Ascending aorta (tissue), 2 donors: ENCODE measurements at regions of chr11 and their contacts with region 1.

Region 1: DNA sequence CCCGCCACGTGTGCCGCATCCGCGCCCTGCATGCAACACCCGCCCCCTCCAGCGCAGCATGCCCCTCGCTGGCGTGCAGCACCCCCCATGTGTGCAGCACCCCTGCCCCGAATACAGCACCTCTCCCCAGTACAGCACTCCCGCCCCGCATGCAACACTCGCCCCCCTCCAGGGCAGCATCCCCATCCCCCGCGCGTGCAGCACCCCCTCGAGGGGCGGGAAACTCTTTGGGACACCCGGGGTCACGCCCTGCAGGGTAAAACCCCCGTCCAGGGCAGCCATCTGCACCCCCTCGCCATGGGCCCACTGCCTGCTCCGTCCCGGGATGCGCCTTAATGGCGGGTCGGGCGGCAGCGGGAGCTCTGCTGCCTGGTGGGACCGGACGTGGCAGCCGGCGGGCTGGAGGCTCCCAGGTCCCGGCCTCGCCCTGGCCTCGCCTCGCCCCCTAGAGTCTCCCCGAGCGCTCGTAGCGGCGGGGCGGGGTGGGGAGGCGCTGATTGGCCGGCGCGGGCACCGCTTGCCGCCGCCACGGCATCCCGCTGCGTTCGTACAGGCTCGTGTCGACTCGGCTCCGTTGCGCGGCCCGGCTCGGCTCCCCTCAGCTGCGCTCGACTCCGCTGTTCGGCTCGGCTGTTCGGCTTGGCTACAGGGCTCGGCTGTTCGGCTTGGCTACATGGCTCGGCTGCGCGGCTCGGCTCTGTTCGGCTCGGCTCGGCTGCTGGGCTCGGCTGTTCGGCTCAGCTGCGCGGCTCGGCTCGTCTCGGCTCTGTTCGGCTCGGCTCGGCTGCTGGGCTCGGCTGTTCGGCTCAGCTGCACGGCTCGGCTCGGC is 417 bp upstream of the BRSK2 start:
- DNase-seq: peak; percentile 81 to 98
- H3K4me3 ChIP-seq: peak overlapping the region; percentile 59 to 66
- H3K27ac ChIP-seq: peak overlapping the region; percentile 37 to 50
- H3K4me1 ChIP-seq: peaks cover 4 to 11% of the 10 kb centered on the region in 2 donors
- H3K27me3 ChIP-seq: peaks cover 24% of the 10 kb centered on the region
- CTCF ChIP-seq: peak in 2 of 3 experiments; percentile 10 to 33

Region 2: DNA sequence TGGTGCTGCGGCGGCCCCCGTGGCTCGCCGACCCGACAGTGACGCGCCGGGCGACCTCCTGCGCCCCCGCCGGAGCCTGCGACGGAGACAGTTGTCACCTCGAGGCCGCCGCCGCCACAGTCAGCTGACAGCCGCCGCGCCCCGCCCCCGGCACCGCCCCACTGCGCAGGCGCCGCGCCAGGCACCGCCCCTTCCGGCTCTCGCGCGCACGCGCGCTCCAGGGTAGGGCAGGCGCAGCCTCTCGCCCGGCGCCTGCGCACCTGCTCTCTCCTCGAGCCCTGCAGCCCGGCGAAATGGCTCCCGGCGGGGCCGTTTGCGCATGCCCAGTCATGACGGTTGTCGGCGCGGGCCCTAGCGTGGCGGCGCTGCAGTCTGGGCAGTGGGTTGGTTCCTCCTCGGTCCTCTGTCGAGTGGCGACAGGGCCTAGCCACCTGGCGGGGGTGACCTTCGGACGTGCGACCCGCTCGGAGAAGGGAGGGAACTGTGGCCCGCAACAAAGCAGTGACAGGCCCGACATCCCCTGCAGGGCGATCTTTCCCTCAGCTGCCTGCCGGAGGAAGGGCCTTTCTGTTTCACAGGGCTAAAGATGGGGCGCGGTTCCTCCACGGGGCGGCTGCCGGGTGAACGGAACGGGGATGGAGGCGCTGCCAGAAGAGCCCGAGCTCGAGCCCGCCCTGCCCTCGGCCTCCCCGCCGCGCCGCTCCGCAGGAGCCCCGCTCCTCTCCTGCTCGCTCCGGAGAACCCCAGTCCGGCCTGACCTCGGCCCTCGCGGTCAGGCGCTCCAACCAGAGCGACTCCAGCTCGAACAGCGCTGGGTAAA is 79.6 kb before region 1 on chr11 and contains the start of gene TOLLIP:
- intact Hi-C with region 1: loop called (anchors 2 kb)
- DNase-seq: peak; percentile 80 to 97
- H3K4me3 ChIP-seq: peak within 1 kb of the TSS; percentile 98 to 99
- H3K27ac ChIP-seq: peak within 1 kb of the TSS; percentile 91 to 92
- H3K4me1 ChIP-seq: peaks cover 15 to 25% of the 10 kb centered on the region in 2 donors
- H3K27me3 ChIP-seq: no peaks in the 10 kb centered on the region
- CTCF ChIP-seq: peak in 2 of 3 experiments; percentile 14 to 49
- total RNA-seq, gene TOLLIP: 63.0 TPM

Region 3: DNA sequence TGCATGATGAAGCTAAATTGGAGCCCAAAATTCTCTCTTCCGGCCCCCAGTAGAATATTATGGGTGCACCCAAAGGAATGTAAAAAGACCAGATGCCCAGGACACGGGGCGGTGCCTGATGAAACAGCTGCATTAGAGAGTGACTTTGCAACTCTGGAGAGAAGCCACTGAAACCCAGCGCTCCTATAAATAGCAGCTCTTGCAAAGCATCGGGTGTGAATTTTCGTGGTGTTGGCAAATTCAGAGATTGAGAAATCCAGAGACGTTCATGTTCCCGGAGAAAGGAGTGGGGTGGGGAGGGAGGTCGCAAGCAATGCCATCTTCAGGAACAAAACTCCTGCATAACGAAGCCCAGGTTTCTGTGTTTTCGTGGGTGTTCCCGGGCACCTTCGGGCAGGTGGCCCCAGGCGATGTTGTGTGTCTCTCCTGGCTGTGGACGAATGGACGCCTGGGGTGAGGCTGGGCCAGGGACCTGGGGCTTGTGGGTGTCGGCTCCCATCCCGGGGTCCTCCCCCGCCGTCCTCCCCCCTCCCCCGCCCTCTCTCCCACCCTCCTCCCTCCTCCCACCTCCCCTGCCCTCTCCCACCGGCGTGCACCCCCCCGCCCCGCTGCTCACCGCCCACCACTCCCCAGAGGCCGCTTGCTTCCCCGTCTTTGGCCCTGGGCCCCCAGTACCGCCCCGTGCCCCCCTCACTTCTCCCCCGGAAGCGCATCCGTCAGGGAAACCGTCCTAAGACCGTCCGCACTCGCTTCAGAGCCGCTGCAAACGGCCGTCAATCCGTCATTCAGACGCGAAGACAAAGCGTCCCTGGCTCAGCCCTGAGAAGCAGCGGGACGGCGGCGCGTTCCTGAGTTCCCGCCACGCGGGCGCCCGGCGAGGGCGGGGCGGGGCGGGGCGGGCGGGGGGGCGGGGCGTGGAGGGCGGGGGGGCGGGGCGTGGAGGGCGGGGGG is 53.2 kb before region 1 on chr11:
- intact Hi-C with region 1: loop called (anchors 1 kb)
- DNase-seq: peak; percentile 59 to 93
- H3K4me3 ChIP-seq: peak overlapping the region; percentile 61 to 66
- H3K27ac ChIP-seq: peak overlapping the region; percentile 87
- H3K4me1 ChIP-seq: peaks cover 5 to 8% of the 10 kb centered on the region in 2 donors
- H3K27me3 ChIP-seq: no peaks in the 10 kb centered on the region
- CTCF ChIP-seq: no peak

Region 4: DNA sequence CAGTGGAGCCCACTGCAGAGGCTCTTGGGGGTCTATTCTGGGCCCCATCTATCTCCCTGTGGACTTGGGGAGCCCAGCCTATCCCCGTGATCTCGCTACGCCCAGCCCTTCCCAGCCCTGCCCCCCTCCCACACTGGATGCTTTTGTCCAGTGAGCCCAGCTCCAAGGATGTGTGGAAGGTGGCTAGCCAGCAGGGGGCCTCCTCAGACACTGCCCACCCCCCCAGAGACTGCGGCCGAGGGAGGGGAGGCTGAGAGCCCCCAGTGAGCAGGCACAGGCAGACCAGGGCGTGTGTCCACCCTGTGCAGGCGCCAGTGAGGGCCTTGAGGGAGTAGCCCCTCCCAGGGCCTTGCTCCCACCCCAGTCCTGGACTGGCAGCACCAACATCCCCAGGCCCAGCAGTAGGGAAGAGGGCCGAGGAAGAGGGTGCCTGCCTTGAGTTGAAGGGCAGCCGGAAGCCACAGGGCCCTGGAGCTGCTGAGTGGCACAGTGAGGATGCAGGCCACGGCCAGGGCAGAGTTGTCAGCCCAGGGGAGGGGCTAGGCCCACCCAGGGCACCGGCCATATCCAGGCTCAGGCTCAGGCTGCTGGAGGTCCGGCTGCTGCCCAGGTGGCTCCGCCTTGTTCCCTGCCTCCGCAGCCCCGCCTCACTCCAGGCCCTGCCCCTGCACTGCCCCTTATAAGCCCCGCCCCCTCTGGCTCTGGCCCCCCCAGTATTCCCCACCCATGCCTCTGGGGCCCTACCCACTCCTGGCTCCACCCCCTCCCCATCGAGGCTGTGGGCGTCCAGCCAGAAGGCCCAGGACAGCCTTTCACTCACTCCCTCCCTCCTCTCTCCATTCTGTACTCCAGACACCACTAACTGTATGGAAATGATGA is 69.3 kb after region 1 on chr11:
- intact Hi-C with region 1: loop called (anchors 5 kb)
- DNase-seq: peak in 1 of 2 donors; percentile 86
- H3K4me3 ChIP-seq: no peak overlapping the region
- H3K27ac ChIP-seq: peak overlapping the region; percentile 86 to 89
- H3K4me1 ChIP-seq: peaks cover 14 to 28% of the 10 kb centered on the region in 2 donors
- H3K27me3 ChIP-seq: no peaks in the 10 kb centered on the region
- CTCF ChIP-seq: peak; percentile 15 to 41 (median 32)